ENCODE measurements at regions of chr14 and their contacts with region 1.

Region 1: DNA sequence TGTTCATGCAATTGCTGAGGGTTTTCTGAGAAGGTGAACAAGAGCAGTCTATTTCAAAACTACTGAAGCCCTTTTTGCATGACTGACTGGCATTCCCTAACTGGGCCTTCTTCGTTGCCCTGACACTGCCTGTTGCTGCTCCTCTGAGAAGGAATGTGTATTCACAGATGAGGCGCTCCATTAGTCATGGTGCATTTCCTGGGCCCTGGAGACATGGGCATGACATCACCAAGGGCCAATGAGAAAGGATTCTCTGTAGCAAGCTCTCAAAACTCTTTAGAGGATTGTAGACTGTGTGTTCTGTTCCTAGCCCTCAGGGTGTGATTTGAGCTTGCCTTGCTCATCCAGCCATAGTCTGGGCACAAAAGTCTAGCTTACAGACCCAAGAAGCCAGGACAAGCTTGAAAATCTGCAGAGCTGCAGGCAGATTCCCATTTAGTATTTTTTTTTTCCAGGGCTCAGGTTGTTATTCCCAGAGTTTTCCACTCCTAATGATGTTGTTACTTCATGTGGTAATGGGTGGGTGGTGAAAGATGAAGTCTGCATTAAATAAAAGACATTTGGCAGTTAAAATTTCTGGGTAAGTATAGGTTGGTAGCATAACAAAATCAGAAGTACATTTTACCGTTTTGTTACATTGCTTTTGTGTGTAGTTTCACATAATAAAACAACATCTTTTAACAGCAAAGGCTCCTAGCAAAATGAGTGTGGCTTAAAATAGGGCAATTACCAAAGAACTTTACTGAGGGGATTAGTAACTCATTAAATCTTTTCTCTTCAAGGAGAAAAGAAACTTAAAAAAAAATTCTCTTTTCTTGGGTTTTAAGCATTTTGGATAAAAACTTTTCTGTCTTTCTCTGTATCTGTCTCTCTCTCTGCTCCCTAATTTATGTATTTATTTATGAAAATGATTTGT is 318.4 kb downstream of the RAD51B start:
- DNase-seq: peak; percentile 99
- H3K4me3 ChIP-seq: no peak overlapping the region
- H3K27ac ChIP-seq: peak overlapping the region; percentile 99
- H3K4me1 ChIP-seq: peaks cover 63% of the 10 kb centered on the region
- H3K27me3 ChIP-seq: no peaks in the 10 kb centered on the region
- CTCF ChIP-seq: no peak

Region 2: GRCh38 chr14:68181519-68182326 is 43.8 kb after region 1 on chr14:
- CTCF ChIA-PET with region 1: no interaction called
- dilution Hi-C with region 1: no loop called
- in situ Hi-C with region 1: no loop called
- intact Hi-C with region 1: no loop called
- DNase-seq: peak; percentile 58
- H3K4me3 ChIP-seq: no peak overlapping the region
- H3K27ac ChIP-seq: no peak overlapping the region
- H3K4me1 ChIP-seq: peaks cover 11% of the 10 kb centered on the region
- H3K27me3 ChIP-seq: no peaks in the 10 kb centered on the region
- CTCF ChIP-seq: no peak

Region 3: GRCh38 chr14:68191567-68192321 is 53.8 kb after region 1 on chr14:
- CTCF ChIA-PET with region 1: no interaction called
- dilution Hi-C with region 1: loop called (anchors 5 kb)
- in situ Hi-C with region 1: no loop called
- intact Hi-C with region 1: loop called (anchors 2 kb)
- DNase-seq: peak; percentile 91
- H3K4me3 ChIP-seq: no peak overlapping the region
- H3K27ac ChIP-seq: no peak overlapping the region
- H3K4me1 ChIP-seq: no peaks in the 10 kb centered on the region
- H3K27me3 ChIP-seq: no peaks in the 10 kb centered on the region
- CTCF ChIP-seq: no peak

Region 4: DNA sequence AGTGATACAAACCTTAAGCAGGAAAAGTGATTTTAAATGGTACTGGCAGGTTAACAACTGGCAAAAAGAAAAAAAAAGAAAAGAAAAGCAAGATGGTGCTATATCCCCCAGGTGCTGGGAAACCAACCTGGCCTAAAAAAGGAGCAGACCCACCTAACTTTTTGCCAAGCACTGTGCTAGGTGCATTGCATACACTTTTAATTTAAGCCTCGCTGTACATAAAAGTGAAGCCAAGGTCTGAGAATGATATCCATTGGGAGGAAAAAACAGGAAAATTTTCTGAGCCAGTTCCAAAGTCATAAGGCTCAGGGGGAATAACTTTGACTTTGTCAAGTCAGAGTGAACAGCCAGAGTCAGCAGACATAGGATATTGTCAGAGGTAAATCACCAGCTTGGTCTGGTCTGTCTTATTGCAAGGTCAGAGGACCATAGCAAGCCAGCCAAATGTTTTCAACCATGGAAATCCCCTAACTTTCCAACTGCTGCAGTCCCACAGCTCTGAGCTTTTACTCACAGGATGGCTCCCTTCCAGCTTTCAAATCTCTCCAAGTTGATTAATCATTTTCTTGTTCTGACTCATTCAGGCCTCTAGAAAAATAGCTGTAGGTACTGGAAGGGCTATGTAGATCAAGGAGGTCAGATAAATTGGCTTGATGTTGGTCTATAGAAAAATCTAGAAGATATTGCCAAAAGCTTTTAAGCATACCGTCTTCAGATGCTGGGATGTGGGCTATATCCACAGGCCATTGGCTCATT is 94.5 kb after region 1 on chr14:
- CTCF ChIA-PET with region 1: no interaction called
- dilution Hi-C with region 1: no loop called
- in situ Hi-C with region 1: no loop called
- intact Hi-C with region 1: loop called (anchors 2 kb)
- DNase-seq: peak; percentile 99
- H3K4me3 ChIP-seq: no peak overlapping the region
- H3K27ac ChIP-seq: peak overlapping the region; percentile 92
- H3K4me1 ChIP-seq: peaks cover 38% of the 10 kb centered on the region
- H3K27me3 ChIP-seq: no peaks in the 10 kb centered on the region
- CTCF ChIP-seq: no peak